Activated T-helper 1 cell treated with anti-CD3 and anti-CD28 coated beads, Interleukin-12 subunit alpha, Interleukin-12 subunit beta, Interleukin-2, Interleukin-4 antibody, amounts not matched to agents 30 ng/mL and 10 ng/mL and 1 ng/mL, durations not matched to agents 14 hours and 24 hours and 36 hours (primary cell): ENCODE measurements at regions of chr18 and their contacts with region 1.

Region 1: DNA sequence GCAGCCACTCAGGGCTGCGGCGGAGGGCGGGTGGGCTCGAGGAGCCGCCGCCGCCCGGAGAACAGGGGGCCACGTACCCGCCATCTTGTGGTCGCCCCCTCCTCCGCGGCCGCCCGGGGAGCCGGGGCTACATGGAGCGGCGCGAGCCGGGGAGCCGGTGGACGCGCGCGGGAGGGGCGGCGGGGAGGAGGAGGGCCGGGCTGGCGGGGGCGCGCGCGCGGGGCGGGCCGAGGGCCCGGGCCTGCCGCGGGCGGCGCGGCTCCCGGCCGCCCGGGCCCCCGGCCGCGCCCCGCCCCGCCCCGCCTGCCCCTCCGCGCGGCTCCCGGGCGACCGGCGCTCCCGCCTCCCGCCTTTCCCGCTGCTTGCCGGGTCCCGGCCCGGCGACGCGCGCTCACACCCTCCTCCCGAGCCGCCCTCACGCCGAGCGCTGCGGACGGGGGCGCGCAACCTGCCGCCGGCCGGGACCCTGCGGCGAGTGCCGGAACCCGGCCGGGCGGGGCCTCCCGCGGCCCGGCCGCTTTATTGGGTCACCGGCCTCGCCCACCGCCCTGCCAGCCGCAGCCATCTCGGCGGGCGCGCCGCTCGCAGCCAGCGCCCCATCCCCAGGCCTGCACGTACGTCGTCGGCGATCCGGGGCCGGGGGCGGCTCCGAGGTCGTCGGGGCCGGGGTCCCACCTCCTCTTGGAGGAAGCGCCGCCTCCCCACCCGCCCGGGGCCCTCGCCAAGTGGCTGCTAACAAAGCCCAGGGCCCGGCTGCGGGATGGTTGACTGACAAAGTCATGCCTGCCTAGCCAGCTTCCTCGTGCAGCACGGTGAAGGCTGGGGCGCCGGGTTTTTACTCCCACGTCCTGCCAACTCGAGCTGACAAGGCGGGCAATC is at the start of gene PPP4R1:
- DNase-seq: peak; percentile 61
- H3K4me3 Mint-ChIP-seq: peak within 1 kb of the TSS; percentile 95
- H3K27ac Mint-ChIP-seq: peak within 1 kb of the TSS; percentile 92
- H3K4me1 Mint-ChIP-seq: peaks cover 42% of the 10 kb centered on the region
- H3K27me3 Mint-ChIP-seq: peaks cover 2% of the 10 kb centered on the region
- total RNA-seq, gene PPP4R1: 49.5 and 54.8 TPM in 2 replicates

Region 2: GRCh38 chr18:8704361-8705279 is 910.0 kb before region 1 on chr18:
- intact Hi-C with region 1: loop called (anchors 10 kb)
- DNase-seq: peak; percentile 80
- H3K4me3 Mint-ChIP-seq: peak overlapping the region; percentile 89
- H3K27ac Mint-ChIP-seq: peak overlapping the region; percentile 23
- H3K4me1 Mint-ChIP-seq: peaks cover 14% of the 10 kb centered on the region
- H3K27me3 Mint-ChIP-seq: peaks cover 69% of the 10 kb centered on the region

Region 3: GRCh38 chr18:9136315-9137155 is 478.1 kb before region 1 on chr18 and contains the start of gene ANKRD12:
- intact Hi-C with region 1: loop called (anchors 5 kb)
- DNase-seq: peak; percentile 98
- H3K4me3 Mint-ChIP-seq: peak within 1 kb of the TSS; percentile 94
- H3K27ac Mint-ChIP-seq: peak within 1 kb of the TSS; percentile 99
- H3K4me1 Mint-ChIP-seq: peaks cover 54% of the 10 kb centered on the region
- H3K27me3 Mint-ChIP-seq: no peaks in the 10 kb centered on the region
- total RNA-seq, gene ANKRD12: 61.3 and 62.2 TPM in 2 replicates

Region 4: GRCh38 chr18:9474983-9475642 is 139.5 kb before region 1 on chr18 and contains the start of gene RALBP1:
- intact Hi-C with region 1: loop called (anchors 2 kb)
- DNase-seq: peak; percentile 98
- H3K4me3 Mint-ChIP-seq: peak within 1 kb of the TSS; percentile 89
- H3K27ac Mint-ChIP-seq: peak within 1 kb of the TSS; percentile 95
- H3K4me1 Mint-ChIP-seq: peaks cover 30% of the 10 kb centered on the region
- H3K27me3 Mint-ChIP-seq: peaks cover 4% of the 10 kb centered on the region
- total RNA-seq, gene RALBP1: 40.9 and 42.4 TPM in 2 replicates

Region 5: DNA sequence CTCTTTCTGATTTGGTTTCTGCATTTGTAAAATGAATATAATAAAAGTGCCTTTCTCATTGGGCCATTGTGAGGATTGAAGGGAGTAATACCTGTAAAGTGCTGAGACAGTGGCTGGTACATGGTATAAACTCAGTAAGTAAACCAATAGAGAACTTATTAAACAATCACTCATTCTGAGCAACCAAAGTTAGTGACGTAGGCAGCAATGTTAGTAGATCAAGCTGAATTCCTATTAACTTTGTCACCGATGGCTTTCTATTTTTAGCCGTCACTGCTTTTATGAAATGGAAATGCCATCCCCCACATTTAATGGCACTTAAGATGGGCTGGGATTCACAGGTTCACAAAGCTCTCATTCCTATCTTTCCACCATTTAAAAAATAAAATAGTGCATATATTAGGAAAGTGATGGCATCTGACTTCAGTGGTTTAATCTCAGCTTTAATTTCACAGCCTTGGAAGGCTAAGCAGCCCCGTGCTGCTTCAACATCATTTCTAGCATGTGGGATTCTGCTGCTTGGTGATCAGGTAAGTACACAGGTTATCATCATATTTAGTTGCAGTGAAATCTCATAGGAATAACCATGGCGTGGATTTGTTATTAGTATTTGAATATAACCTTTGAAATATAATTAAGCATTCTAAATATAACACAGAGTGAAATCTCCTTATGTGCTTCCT is 17.3 kb after region 1 on chr18:
- intact Hi-C with region 1: no loop called
- DNase-seq: no peak
- H3K4me3 Mint-ChIP-seq: no peak overlapping the region
- H3K27ac Mint-ChIP-seq: no peak overlapping the region
- H3K4me1 Mint-ChIP-seq: no peaks in the 10 kb centered on the region
- H3K27me3 Mint-ChIP-seq: peaks cover 13% of the 10 kb centered on the region

Region 6: GRCh38 chr18:9708057-9708433 is 93.4 kb after region 1 on chr18 and contains the start of gene RAB31:
- intact Hi-C with region 1: loop called (anchors 2 kb)
- DNase-seq: no peak
- H3K4me3 Mint-ChIP-seq: peak within 1 kb of the TSS; percentile 80
- H3K27ac Mint-ChIP-seq: no peak within 1 kb of the TSS
- H3K4me1 Mint-ChIP-seq: peaks cover 39% of the 10 kb centered on the region
- H3K27me3 Mint-ChIP-seq: peaks cover 79% of the 10 kb centered on the region
- total RNA-seq, gene RAB31: 0.13 and 0.78 TPM in 2 replicates

Region 7: DNA sequence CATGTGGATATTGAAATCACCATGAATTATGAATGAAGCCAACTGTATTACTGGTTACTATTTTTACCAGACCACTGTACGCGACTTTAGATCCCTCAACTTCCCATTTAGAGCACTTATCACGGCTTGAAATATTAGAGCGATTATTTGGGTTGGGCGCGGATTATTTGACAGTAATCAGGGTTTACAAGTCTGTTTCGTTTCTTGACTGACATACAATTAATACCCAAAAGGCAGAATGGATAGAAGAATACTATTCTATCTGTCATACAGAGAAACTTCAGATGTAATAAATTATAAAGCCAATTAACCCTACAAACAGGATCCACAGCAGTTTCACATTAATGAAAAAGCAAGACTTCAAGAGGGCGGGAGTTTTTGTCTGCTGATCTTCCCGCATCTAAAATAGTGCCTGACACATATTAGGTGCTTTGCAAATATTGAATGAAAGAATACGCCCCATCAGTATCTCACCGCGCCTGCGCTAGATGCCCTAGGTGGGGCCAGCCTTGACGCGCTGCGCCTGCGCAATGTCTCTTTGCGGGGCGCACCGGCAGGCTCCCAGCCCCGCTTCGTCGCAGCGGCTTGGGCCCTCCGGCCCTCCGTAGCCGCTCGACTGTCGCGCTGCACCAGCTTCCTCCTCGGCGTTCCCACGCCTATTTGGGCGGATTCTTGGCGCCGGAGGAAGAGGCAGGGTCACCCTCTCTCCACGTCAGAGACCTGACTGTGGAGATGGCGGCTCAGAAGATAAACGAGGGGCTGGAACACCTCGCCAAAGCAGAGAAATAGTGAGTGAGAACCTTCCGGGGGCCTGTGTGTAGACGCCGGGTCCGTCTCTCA is 911.0 kb after region 1 on chr18 and contains the start of gene NAPG:
- intact Hi-C with region 1: loop called (anchors 5 kb)
- DNase-seq: peak; percentile 91
- H3K4me3 Mint-ChIP-seq: peak within 1 kb of the TSS; percentile 97
- H3K27ac Mint-ChIP-seq: peak within 1 kb of the TSS; percentile 98
- H3K4me1 Mint-ChIP-seq: peaks cover 63% of the 10 kb centered on the region
- H3K27me3 Mint-ChIP-seq: peaks cover 7% of the 10 kb centered on the region
- total RNA-seq, gene NAPG: 37.4 and 40.3 TPM in 2 replicates